Natural killer cell (primary cell): ENCODE measurements at regions of chr1 and their contacts with region 1.

Region 1: DNA sequence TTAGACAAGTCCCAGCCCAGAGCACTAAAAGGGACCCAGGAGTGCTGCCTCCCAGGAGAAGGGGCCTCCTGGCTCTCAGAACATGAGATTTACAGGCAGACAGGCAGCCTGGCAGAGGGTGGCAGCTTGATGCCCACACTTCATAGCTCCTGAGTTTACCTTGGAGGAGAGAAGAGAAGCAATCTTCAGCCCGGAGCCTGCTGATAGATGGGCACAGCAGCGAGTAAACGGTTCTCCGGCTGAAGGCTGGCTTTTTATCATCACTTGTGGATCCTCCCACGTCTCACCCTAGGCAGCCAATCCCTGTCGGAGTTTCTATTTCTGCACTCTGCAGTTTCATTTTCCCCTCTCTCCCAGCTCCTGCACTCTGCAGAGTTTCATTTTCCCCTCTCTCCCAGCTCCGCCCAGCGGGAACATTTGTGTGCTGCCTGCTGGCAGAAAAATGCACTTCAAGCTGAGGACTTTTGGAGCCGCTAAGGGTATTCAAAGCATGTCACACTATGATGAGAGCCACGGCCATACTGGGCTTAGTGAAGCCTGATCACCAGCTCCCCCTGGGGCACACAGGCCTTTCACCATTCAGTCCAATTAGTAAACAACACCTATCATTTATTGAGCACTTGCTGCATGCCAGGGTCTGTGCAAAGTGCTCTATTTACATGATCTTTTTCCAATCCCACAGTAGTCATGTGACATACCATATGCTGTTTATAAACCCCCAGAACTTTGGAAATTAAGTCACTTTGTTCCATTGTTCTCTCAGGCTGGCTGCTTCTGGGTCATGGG is at the start of gene IFI6:
- DNase-seq: peak; percentile 65 to 92
- ATAC-seq: peak; percentile 91 to 95 (median 91)
- H3K4me3 ChIP-seq: peak within 1 kb of the TSS; percentile 48
- H3K4me3 Mint-ChIP-seq: peak within 1 kb of the TSS; percentile 97
- H3K27ac ChIP-seq: peak within 1 kb of the TSS; percentile 85
- H3K27ac Mint-ChIP-seq: peak within 1 kb of the TSS; percentile 87 to 96
- H3K4me1 ChIP-seq: peaks cover 33% of the 10 kb centered on the region
- H3K4me1 Mint-ChIP-seq: peaks cover 28 to 29% of the 10 kb centered on the region in 2 donors
- H3K27me3 ChIP-seq: no peaks in the 10 kb centered on the region
- H3K27me3 Mint-ChIP-seq: no peaks in the 10 kb centered on the region
- CTCF ChIP-seq: peak; percentile 36
- total RNA-seq, gene IFI6: 26.7 to 36.0 (median 34.8) TPM

Region 2: DNA sequence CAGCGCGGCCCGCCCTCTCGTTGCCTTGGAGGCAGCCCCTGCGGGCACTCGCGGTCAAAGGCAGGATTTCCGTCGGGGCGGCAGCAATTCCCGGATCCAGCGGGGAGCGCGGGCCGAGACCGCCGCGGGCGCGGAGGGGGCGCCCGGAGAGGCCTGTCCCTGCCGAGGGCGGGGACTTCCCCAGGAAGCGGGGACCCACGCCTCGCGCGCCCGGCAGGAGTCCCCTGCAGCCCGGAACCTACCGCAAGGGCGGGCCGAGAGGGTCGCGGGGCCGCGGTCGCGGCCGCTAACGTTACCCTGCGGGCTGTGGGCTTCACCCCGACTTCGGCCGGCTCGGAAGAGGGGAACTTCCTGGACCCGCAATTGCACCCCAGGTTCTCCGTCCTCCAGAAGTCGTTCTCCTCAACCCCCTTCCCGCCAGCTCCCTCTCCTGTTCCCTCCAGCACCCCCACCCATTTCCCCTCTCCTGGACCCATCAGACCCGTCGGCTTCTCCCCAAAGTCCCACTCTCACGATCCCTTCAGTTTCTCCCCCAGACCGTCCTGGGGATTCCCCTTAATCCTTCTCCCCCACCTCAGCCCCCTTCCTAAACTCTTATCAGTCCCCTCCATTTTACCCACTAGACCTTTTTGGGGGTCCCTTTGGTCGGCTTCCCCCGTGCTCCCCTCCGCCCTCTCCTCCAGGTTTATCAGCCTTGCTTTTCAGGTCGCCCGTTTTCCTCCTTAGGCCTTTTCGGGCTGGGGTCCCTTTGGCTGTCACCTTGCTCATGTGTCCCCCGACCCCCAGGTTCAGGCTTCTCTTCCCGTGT is 37.8 kb before region 1 on chr1:
- intact Hi-C with region 1: no loop called
- DNase-seq: peak; percentile 73 to 81
- ATAC-seq: peak; percentile 47 to 72 (median 65)
- H3K4me3 ChIP-seq: peak overlapping the region; percentile 71
- H3K4me3 Mint-ChIP-seq: peak overlapping the region; percentile 86
- H3K27ac ChIP-seq: peak overlapping the region; percentile 94
- H3K27ac Mint-ChIP-seq: peak overlapping the region; percentile 89 to 92
- H3K4me1 ChIP-seq: peaks cover 76% of the 10 kb centered on the region
- H3K4me1 Mint-ChIP-seq: peaks cover 51 to 85% of the 10 kb centered on the region in 2 donors
- H3K27me3 ChIP-seq: no peaks in the 10 kb centered on the region
- H3K27me3 Mint-ChIP-seq: no peaks in the 10 kb centered on the region
- CTCF ChIP-seq: no peak

Region 3: GRCh38 chr1:27646676-27647075 is 25.5 kb before region 1 on chr1:
- intact Hi-C with region 1: no loop called
- DNase-seq: no peak
- ATAC-seq: no peak
- H3K4me3 ChIP-seq: no peak overlapping the region
- H3K4me3 Mint-ChIP-seq: no peak overlapping the region
- H3K27ac ChIP-seq: no peak overlapping the region
- H3K27ac Mint-ChIP-seq: no peak overlapping the region
- H3K4me1 ChIP-seq: peaks cover 26% of the 10 kb centered on the region
- H3K4me1 Mint-ChIP-seq: peaks cover 25 to 37% of the 10 kb centered on the region in 2 donors
- H3K27me3 ChIP-seq: no peaks in the 10 kb centered on the region
- H3K27me3 Mint-ChIP-seq: no peaks in the 10 kb centered on the region
- CTCF ChIP-seq: no peak

Region 4: GRCh38 chr1:27725374-27726173 is 53.4 kb after region 1 on chr1 and contains the start of gene FAM76A:
- intact Hi-C with region 1: loop called (anchors 1 kb)
- DNase-seq: peak; percentile 99 to 100
- ATAC-seq: peak; percentile 90 to 98 (median 91)
- H3K4me3 ChIP-seq: peak within 1 kb of the TSS; percentile 79
- H3K4me3 Mint-ChIP-seq: peak within 1 kb of the TSS; percentile 93
- H3K27ac ChIP-seq: peak within 1 kb of the TSS; percentile 88
- H3K27ac Mint-ChIP-seq: peak within 1 kb of the TSS; percentile 96 to 97
- H3K4me1 ChIP-seq: peaks cover 18% of the 10 kb centered on the region
- H3K4me1 Mint-ChIP-seq: peaks cover 5 to 19% of the 10 kb centered on the region in 2 donors
- H3K27me3 ChIP-seq: no peaks in the 10 kb centered on the region
- H3K27me3 Mint-ChIP-seq: no peaks in the 10 kb centered on the region
- CTCF ChIP-seq: peak; percentile 44
- total RNA-seq, gene FAM76A: 19.5 to 21.8 (median 19.6) TPM